AG04450 (cell line): ENCODE measurements at regions of chr17 and their contacts with region 1.

Region 1: GRCh38 chr17:29148790-29149430 is 31.3 kb downstream of the MYO18A start:
- DNase-seq: peak; percentile 79
- H3K4me3 ChIP-seq: peak overlapping the region; percentile 56
- H3K27ac ChIP-seq: peak overlapping the region; percentile 47
- H3K27me3 ChIP-seq: no peaks in the 10 kb centered on the region
- CTCF ChIP-seq: peak; percentile 88

Region 2: GRCh38 chr17:29116804-29117772 is 31.8 kb before region 1 on chr17:
- CTCF ChIA-PET with region 1: interaction called, 20 read pairs
- POLR2A ChIA-PET with region 1: interaction called, 3 read pairs
- DNase-seq: no peak
- H3K4me3 ChIP-seq: no peak overlapping the region
- H3K27ac ChIP-seq: no peak overlapping the region
- H3K27me3 ChIP-seq: no peaks in the 10 kb centered on the region
- CTCF ChIP-seq: peak; percentile 83

Region 3: DNA sequence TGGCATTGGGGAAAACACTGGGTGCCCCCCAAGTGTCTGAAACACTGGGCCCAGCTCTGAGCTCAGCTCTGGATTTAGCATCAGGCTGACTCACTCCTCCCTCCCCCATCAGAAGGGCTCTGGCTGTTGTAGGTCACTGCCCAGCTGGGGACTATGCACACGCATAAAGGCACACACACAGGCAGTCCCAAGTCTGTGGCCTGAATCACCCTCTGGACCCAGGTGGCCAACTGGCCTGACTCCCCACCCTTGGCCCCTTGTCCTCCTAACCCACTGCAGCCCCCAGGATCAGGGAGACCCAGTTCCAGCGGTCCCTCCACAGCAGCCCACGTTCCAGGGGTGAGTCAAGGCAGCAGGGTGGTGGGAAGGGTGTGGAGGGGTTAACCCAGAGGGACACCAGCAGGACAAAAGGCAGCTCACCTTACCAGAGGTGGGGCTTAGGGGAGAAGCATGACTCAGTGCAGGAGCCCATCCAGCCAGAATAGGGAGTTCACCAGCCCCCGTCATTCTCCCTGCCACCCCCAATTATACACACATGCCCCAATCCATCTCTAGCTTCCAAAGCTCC is 15.7 kb before region 1 on chr17:
- CTCF ChIA-PET with region 1: interaction called, 29 read pairs
- POLR2A ChIA-PET with region 1: interaction called, 3 read pairs
- DNase-seq: no peak
- H3K4me3 ChIP-seq: no peak overlapping the region
- H3K27ac ChIP-seq: peak overlapping the region; percentile 96
- H3K27me3 ChIP-seq: no peaks in the 10 kb centered on the region
- CTCF ChIP-seq: no peak

Region 4: DNA sequence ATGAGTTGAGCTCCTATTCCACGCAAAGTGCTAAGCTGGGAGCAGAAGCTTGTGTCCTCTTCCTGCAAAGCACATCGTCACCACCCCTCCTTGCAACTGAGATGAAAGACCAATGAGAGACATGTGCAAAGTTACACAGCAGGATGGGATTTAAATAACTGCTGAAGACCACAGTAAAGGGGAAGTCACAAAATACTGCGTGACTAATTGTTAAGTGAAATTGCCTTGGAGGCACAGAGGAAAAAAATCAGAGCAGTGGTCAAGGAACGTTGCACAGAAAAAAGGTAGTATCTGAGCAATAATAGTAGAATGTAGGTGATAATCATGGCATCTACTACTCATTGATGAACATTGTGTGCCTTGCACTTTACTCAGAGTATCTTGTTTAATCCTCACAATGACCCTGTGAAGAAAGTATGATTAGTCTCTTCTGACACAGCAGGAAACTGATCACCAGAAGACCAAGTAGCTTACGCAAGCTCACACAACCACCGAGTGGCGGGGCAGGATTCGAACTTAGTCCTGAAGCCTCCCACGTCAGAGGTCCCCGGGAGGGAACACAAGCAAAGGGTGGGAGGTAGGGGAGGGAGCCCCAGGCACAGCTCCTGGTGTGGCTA is 46.7 kb after region 1 on chr17:
- CTCF ChIA-PET with region 1: no interaction called
- POLR2A ChIA-PET with region 1: no interaction called
- DNase-seq: no peak
- H3K4me3 ChIP-seq: no peak overlapping the region
- H3K27ac ChIP-seq: no peak overlapping the region
- H3K27me3 ChIP-seq: peaks cover 14% of the 10 kb centered on the region
- CTCF ChIP-seq: no peak

Region 5: GRCh38 chr17:29212681-29213121 is 63.8 kb after region 1 on chr17:
- CTCF ChIA-PET with region 1: interaction called, 158 read pairs
- POLR2A ChIA-PET with region 1: interaction called, 5 read pairs
- DNase-seq: no peak
- H3K4me3 ChIP-seq: no peak overlapping the region
- H3K27ac ChIP-seq: peak overlapping the region; percentile 11
- H3K27me3 ChIP-seq: no peaks in the 10 kb centered on the region
- CTCF ChIP-seq: no peak

Region 6: DNA sequence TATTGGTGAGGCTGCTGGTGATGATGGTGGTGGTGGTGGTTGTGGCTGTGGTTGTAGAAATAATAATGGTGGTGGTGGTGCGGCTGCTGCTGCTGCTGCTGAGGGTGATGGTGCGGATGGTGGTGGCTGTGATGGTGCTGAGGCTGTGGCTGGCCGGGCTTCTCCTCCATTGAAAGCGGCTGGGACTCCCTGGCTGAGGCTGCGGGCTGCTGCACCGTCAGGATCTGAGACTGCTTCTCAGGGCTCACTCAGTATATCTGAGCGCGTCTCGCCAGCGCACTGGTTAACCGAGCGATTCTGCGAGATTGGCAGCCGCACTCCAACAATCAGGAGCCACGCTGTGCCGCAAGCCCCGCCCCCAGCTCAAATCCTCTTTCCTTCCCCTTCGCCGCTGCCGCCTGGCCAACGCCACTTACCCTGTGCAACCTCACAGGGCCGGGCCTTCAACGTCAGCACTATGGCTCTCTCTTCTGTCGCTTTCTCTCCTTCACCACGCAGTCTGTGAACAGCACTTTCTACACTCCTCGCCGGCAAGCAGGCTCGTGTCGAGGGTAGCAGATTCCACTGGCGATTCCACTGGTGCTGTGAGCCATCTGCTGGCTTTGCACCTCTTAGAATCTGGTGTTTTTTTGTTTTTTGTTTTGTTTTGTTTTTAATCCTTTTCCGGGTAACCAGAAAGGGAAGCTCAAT is 145.1 kb after region 1 on chr17 and contains the start of gene NUFIP2:
- CTCF ChIA-PET with region 1: interaction called, 70 read pairs
- POLR2A ChIA-PET with region 1: interaction called, 9 read pairs
- DNase-seq: peak; percentile 97
- H3K4me3 ChIP-seq: peak within 1 kb of the TSS; percentile 98
- H3K27ac ChIP-seq: peak within 1 kb of the TSS; percentile 97
- H3K27me3 ChIP-seq: no peaks in the 10 kb centered on the region
- CTCF ChIP-seq: 0 out of 2 replicates have a peak, but pooled peaks have one; percentile 4
- polyA plus RNA-seq, gene NUFIP2: 13.6 and 14.7 TPM in 2 replicates